ENCODE measurements at regions of chr1 and their contacts with region 1.

Region 1: GRCh38 chr1:153220606-153221303 is 3.4 kb downstream of the PRR9 start:
- DNase-seq: peak in 4 of 5 donors; percentile 37 to 67 (median 53)
- H3K4me3 ChIP-seq: no peak overlapping the region
- H3K27ac ChIP-seq: peak overlapping the region in 1 of 2 donors; percentile 48
- H3K4me1 ChIP-seq: peaks cover 3% of the 10 kb centered on the region
- H3K27me3 ChIP-seq: no peaks in the 10 kb centered on the region
- CTCF ChIP-seq: no peak
- EP300 ChIP-seq: no peak
- POLR2A ChIP-seq: no peak

Region 2: DNA sequence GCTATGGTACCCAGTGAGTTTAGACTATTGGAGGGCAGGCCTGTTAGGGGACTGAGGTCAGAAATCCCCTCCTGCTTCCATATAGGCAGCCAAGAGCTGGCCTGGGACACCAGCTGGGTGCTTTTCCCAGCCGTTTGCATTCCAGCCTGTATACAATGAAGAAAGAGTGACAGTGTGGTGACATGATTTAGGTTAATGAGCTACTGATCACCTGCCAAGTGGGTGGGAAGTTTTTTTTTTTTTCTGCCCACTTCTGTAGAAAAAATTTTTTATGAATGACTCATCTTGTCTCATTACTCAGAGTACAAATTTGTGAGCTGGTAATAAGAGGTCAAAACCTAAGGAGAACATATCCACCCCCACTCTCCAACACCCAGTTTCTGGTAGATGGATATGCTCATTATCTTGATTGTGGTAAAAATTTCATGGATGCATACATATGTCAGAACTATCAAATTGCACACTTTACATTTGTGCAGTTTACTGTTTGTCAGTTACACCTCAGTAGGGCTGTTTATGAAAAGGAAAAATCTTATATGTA is 1725.9 kb before region 1 on chr1:
- intact Hi-C with region 1: no loop called
- DNase-seq: no peak
- H3K4me3 ChIP-seq: no peak overlapping the region
- H3K27ac ChIP-seq: no peak overlapping the region
- H3K4me1 ChIP-seq: no peaks in the 10 kb centered on the region
- H3K27me3 ChIP-seq: no peaks in the 10 kb centered on the region
- CTCF ChIP-seq: no peak
- EP300 ChIP-seq: no peak
- POLR2A ChIP-seq: no peak

Region 3: DNA sequence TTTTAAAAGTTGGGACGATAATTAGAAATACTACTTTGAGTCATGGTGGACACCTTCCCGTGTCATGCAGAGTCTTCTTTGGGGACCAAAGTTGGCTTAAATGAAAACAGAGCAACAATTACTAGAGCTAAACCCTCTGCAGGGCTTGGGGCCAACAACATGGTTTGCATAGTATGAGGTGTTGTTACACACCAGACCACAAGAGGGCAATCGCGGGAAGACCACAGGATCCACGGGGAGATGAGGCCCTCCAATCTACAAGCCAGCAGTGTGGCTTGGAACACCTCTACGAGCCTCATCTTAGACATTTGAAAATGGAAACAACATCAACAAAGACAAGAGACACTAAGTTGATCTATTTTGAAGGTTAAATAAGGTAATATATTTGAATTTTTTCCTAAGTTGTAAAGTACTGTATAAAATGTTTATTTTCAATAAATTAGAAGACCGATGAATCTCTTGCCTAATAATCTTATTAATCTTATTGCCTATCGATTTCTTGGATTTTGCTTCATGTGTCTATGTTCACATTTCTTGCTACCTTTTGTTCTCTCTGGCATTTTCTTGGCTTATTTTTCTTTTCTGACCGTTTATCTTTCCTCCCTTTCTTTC is 350.8 kb before region 1 on chr1:
- intact Hi-C with region 1: loop called in 1 of 4 experiments (anchors 5 kb)
- DNase-seq: peak; percentile 49 to 70 (median 61)
- H3K4me3 ChIP-seq: no peak overlapping the region
- H3K27ac ChIP-seq: no peak overlapping the region
- H3K4me1 ChIP-seq: no peaks in the 10 kb centered on the region
- H3K27me3 ChIP-seq: no peaks in the 10 kb centered on the region
- CTCF ChIP-seq: peak in 2 of 3 donors; percentile 28 to 30
- EP300 ChIP-seq: no peak
- POLR2A ChIP-seq: no peak

Region 4: GRCh38 chr1:152917794-152918193 is 303.0 kb before region 1 on chr1:
- intact Hi-C with region 1: loop called in 2 of 4 experiments (anchors 5 kb)
- DNase-seq: peak in 1 of 5 donors; percentile 15
- H3K4me3 ChIP-seq: no peak overlapping the region
- H3K27ac ChIP-seq: no peak overlapping the region
- H3K4me1 ChIP-seq: no peaks in the 10 kb centered on the region
- H3K27me3 ChIP-seq: no peaks in the 10 kb centered on the region
- CTCF ChIP-seq: no peak
- EP300 ChIP-seq: no peak
- POLR2A ChIP-seq: no peak

Region 5: DNA sequence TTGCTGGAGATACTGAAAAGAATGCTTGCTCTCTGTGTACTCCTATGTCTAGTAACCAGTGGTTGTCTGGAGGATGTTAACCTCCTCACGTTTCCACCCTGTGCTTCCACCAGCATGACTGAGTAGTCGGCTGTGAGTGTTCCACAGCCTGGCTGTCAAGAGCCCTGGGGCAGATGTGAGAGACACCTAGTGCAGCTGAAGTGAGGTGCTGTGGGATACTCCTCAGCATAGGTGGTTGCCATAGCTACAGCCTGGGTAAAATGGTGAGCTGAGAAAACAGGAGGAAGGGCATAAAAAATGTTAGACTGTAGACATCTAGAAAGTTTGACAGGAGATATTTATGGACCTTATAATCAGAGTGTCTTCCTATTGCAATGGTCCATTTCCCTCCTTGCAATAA is 296.6 kb before region 1 on chr1:
- intact Hi-C with region 1: loop called in 2 of 4 experiments (anchors 5 kb)
- DNase-seq: no peak
- H3K4me3 ChIP-seq: no peak overlapping the region
- H3K27ac ChIP-seq: no peak overlapping the region
- H3K4me1 ChIP-seq: no peaks in the 10 kb centered on the region
- H3K27me3 ChIP-seq: no peaks in the 10 kb centered on the region
- CTCF ChIP-seq: no peak
- EP300 ChIP-seq: no peak
- POLR2A ChIP-seq: no peak

Region 6: GRCh38 chr1:153261281-153262069 is 40.7 kb after region 1 on chr1:
- intact Hi-C with region 1: no loop called
- DNase-seq: peak; percentile 26 to 68 (median 51)
- H3K4me3 ChIP-seq: peak overlapping the region; percentile 43
- H3K27ac ChIP-seq: no peak overlapping the region
- H3K4me1 ChIP-seq: peaks cover 2% of the 10 kb centered on the region
- H3K27me3 ChIP-seq: no peaks in the 10 kb centered on the region
- CTCF ChIP-seq: no peak
- EP300 ChIP-seq: no peak
- POLR2A ChIP-seq: no peak

Region 7: GRCh38 chr1:153302308-153302707 is 81.6 kb after region 1 on chr1:
- intact Hi-C with region 1: no loop called
- DNase-seq: no peak
- H3K4me3 ChIP-seq: no peak overlapping the region
- H3K27ac ChIP-seq: no peak overlapping the region
- H3K4me1 ChIP-seq: no peaks in the 10 kb centered on the region
- H3K27me3 ChIP-seq: no peaks in the 10 kb centered on the region
- CTCF ChIP-seq: no peak
- EP300 ChIP-seq: no peak
- POLR2A ChIP-seq: no peak

Region 8: GRCh38 chr1:153749408-153750005 is 528.8 kb after region 1 on chr1:
- intact Hi-C with region 1: loop called in 1 of 4 experiments (anchors 5 kb)
- DNase-seq: peak; percentile 82 to 91 (median 86)
- H3K4me3 ChIP-seq: no peak overlapping the region
- H3K27ac ChIP-seq: peak overlapping the region in 1 of 2 donors; percentile 34
- H3K4me1 ChIP-seq: peaks cover 8% of the 10 kb centered on the region
- H3K27me3 ChIP-seq: no peaks in the 10 kb centered on the region
- CTCF ChIP-seq: peak; percentile 79 to 88 (median 87)
- EP300 ChIP-seq: no peak
- POLR2A ChIP-seq: no peak